Cardiac septum (tissue), 1 donor: ENCODE measurements at regions of chr17 and their contacts with region 1.

Region 1: DNA sequence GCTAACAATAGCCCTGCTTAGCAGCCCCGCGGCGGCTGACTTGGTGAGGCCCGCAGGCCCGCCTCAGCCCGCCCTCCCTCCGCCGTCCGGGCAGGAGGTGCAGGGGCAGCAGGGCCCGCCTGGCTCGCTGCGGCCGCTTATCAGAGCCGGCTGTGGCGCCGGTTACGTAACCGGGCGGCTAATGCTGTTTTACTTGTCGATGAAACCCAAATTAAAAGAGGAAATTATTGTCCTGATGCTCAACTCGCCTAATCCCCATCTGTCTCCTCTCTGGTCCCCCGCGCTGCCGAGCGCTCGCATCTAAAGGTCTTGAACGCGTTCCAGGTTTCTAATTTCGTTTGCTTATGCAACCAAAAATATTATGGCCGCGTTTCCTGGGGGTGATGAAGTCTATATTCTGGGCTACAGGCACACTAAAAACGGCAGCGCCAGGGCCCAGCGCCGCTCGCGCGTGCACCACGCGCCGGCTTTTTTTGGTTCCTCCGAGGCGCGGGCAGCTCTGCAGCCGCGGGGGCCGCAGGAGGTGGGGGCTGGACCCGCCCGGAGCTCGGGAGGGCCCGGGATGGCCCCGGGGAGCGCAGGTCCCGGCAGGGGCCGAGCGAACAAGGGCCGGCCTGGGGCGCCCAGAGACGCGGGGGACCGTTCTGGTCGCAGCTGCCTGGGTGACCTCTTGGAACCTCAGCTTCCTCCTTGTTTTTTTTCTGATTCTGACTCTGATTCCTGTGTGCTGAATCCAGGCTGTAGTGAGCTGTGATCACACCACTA is 65.2 kb upstream of the TOB1 start:
- DNase-seq: peak; percentile 92

Region 2: DNA sequence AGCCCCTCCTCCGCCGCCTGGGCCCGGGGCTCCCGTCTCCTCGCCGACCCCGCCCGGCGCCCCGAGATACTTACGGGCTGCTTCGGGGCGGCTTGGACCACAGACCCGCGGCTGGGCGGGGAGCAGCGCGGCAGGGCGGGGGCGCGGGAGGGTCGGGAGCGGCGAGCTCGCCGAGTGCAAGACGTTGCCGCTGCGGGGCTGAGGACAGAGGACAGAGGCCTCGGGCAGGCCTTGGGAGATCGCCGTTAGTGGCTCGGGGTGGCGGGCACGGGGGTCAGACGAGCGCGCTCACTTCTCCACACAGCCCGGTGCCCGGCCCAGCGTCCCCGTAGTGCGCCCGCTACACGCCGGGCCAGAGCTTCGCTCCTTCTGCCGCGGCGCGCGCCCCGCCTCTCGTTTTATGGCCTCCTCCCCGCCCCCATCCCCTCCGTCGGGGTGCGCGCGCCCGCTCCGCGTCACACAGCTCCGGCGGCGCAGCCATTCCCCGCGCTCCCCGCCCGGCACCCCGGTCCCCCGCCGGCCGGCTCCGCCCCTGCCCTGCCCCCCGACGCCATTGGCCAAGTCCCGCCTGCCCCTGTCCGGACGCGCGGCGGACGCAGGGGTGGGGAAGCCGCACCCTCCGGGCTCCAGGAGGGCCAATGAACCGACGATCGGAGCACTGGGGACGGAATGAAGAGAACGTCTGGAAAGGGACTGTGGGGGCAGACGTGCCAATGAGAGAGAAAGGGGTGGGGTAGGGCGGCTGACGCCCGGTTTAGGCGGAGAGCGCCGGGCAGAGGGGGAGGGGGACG is 65.1 kb before region 1 on chr17 and contains the start of gene TOB1:
- intact Hi-C with region 1: loop called (anchors 1 kb)
- DNase-seq: peak; percentile 99
- total RNA-seq, gene TOB1: 71.1 TPM

Region 3: DNA sequence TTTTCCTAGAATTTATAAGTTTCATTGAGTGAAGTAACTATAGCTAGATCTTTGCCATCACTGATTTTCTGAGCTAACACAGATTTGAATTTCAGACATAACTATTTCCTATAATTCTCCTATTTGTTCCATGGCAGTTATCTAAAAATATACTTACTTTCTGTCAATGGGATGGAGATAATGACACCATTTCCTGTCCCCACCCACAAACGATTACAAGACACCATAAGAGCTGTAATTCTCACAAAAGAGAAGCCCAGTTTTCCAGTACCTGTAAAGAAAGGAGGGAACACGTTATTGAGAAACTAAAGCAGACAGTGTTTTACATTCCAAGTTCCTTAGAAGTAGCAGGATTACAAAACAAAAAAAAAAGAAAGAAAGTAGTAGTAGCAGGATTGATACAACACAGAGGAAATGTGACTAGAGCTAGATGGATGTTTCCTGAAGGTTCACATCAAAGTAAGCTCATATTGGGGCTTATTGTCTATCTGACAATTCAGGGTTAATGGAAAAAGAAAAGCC is 45.7 kb after region 1 on chr17:
- intact Hi-C with region 1: no loop called
- DNase-seq: no peak